ENCODE measurements at regions of chr4 and their contacts with region 1.

Region 1: GRCh38 chr4:81030061-81030980 is at the start of gene BMP3:
- DNase-seq: peak in 1 of 2 experiments; percentile 73
- H3K4me3 ChIP-seq: peak within 1 kb of the TSS; percentile 31 to 77 (median 63)
- H3K27ac ChIP-seq: no peak within 1 kb of the TSS
- H3K4me1 ChIP-seq: peaks cover 0 to 6% (median 2%) of the 10 kb centered on the region in 4 experiments; a peak in 4 of 7 replicates
- H3K27me3 ChIP-seq: peaks cover 5 to 41% (median 31%) of the 10 kb centered on the region in 4 experiments
- CTCF ChIP-seq: no peak
- EP300 ChIP-seq: no peak
- POLR2A ChIP-seq: no peak
- RAD21 ChIP-seq: no peak
- total RNA-seq, gene BMP3: 0.06 TPM in 1 of 2 replicates, not detected in the other

Region 2: GRCh38 chr4:81052119-81053068 is 22.1 kb after region 1 on chr4:
- CTCF ChIA-PET with region 1: interaction called, 13 read pairs
- POLR2A ChIA-PET with region 1: no interaction called
- DNase-seq: peak; percentile 44 to 89
- H3K4me3 ChIP-seq: no peak overlapping the region
- H3K27ac ChIP-seq: no peak overlapping the region
- H3K4me1 ChIP-seq: no peaks in the 10 kb centered on the region
- H3K27me3 ChIP-seq: no peaks in the 10 kb centered on the region
- CTCF ChIP-seq: peak; percentile 44 to 75 (median 74)
- EP300 ChIP-seq: no peak
- POLR2A ChIP-seq: no peak
- RAD21 ChIP-seq: peak; percentile 93 to 96